ENCODE measurements at regions of chr5 and their contacts with region 1.

Region 1: DNA sequence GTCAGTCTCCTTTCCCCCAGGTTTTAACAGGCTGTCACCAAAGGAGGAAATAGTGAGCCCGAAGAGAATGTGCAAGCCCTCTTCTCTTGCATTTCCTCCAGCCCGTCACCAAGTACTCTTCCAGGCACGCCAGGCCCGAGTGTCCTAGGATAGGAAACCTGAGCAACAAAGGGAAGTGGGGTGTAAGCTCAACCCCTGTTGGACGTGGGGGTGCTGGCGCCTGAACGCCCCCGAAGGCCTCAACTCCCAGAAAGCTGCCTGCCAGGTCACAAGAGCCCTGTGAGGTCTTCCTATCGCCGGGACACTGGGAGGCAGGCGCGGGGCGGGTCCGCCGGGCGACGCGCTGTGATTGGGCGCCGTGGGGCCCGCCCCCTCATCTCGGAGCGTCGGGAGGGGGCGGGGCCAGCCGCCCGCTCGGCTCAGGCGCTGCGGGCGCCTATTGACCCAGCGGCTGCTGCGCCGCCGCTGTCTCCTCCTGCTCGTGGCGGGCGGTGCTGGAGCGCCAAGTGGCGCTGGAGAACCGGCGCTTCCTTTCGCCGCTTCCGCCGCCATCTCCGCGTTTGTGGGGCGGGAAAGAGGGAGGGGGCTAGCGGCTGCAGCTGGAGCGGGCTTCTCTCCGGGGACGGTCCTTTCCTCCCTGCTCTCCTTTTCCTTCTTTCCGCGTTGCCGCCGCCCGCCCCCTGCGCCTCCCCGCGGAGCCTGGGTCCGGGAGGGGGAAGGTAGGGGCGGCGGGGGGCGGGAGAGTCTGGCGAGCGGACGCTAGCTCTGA is 572 bp upstream of the MAN2A1 start:
- DNase-seq: peak; percentile 74
- H3K4me3 Mint-ChIP-seq: peak overlapping the region; percentile 86
- H3K27ac Mint-ChIP-seq: peak overlapping the region; percentile 91
- H3K4me1 Mint-ChIP-seq: peaks cover 34% of the 10 kb centered on the region
- H3K27me3 Mint-ChIP-seq: peaks cover 6% of the 10 kb centered on the region

Region 2: DNA sequence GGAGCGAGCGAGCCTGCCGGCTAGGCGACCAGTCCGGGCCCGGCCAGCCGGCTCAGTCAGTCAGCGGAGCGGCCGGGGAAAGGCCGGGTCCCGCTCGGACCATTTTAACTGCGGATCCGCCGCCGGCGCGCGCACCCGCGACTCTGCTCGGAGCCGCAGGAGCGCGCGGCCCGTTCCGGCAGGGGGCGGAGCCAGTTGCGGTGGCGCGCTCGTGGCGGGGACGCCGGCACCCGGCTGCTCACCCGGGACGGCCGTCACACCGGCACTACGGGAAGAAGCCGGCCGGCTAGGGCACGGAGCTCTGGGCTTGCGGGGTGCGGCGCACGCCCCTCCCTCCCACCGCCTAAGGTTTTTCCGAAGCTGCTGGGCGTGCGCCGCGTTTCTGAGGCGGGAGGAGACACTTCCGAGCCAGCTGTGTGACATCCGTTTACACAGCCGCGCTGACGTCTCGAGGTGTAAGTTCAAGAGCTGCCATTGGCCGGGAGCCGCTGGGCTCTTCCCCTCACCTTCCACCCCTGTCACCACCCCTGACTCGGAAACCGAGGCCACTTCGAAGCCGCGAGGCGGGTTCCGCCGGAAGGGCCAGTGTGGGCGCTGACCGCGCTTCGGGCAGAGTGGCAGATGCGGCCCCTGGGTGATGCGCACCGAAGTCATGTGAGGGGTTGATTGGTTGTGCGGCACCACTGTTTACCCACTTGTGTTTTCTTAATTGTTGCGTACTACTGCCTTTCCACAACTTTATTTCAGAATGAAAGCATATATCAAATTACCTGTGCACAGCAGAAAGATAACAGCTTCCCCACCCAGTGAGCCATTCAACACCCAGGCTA is 1307.0 kb before region 1 on chr5 and contains the start of gene FBXL17:
- intact Hi-C with region 1: loop called (anchors 5 kb)
- DNase-seq: peak; percentile 89
- H3K4me3 Mint-ChIP-seq: peak within 1 kb of the TSS; percentile 80
- H3K27ac Mint-ChIP-seq: peak within 1 kb of the TSS; percentile 83
- H3K4me1 Mint-ChIP-seq: peaks cover 27% of the 10 kb centered on the region
- H3K27me3 Mint-ChIP-seq: no peaks in the 10 kb centered on the region
- total RNA-seq, gene FBXL17: 7.0 and 9.3 TPM in 2 replicates

Region 3: GRCh38 chr5:109409844-109410388 is 279.2 kb before region 1 on chr5 and contains the start of gene PJA2:
- intact Hi-C with region 1: loop called (anchors 1 kb)
- DNase-seq: peak; percentile 96
- H3K4me3 Mint-ChIP-seq: peak within 1 kb of the TSS; percentile 95
- H3K27ac Mint-ChIP-seq: peak within 1 kb of the TSS; percentile 98
- H3K4me1 Mint-ChIP-seq: peaks cover 41% of the 10 kb centered on the region
- H3K27me3 Mint-ChIP-seq: no peaks in the 10 kb centered on the region
- total RNA-seq, gene PJA2: 52.2 and 52.9 TPM in 2 replicates

Region 4: DNA sequence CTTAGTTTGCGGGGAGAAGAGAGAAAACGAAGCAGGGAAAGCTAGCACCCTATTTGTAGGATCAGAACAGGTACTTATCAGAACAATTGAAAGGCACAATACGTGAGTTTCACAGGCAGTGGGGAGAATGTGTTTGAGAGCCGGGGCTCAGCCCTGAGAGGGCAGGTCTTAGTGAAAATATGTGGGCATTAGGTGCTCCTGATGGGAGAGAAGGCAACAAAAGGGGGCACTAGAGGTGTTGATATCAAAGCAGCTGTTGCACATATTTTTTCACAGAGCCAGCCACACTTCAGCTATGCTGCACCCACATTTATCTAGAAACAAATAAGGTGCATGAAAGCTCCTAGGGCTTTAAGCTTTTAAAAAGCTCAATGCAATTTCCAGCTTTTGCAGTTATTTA is 99.2 kb before region 1 on chr5:
- intact Hi-C with region 1: no loop called
- DNase-seq: no peak
- H3K4me3 Mint-ChIP-seq: no peak overlapping the region
- H3K27ac Mint-ChIP-seq: no peak overlapping the region
- H3K4me1 Mint-ChIP-seq: no peaks in the 10 kb centered on the region
- H3K27me3 Mint-ChIP-seq: peaks cover 2% of the 10 kb centered on the region

Region 5: DNA sequence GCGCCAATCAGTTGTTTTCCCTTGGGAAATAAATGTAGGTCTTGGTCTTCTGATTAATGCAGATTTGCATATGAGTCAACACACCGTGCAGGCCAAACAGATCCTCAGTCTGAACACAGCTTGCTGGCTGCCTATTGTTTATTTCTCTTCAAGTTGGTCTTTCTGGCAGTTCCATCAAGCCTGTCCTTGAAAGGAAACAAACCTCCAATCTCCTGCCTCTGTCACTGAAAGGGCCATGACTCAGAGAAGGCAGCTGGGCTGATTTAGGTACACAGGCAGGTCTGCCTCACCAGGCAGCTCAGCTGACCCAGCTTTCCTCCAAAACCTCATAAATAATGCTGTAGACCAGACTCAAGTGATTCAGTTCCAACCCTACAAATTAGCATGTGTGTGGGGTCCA is 176.5 kb after region 1 on chr5:
- intact Hi-C with region 1: loop called (anchors 2 kb)
- DNase-seq: no peak
- H3K4me3 Mint-ChIP-seq: no peak overlapping the region
- H3K27ac Mint-ChIP-seq: no peak overlapping the region
- H3K4me1 Mint-ChIP-seq: peaks cover 34% of the 10 kb centered on the region
- H3K27me3 Mint-ChIP-seq: no peaks in the 10 kb centered on the region

Region 6: DNA sequence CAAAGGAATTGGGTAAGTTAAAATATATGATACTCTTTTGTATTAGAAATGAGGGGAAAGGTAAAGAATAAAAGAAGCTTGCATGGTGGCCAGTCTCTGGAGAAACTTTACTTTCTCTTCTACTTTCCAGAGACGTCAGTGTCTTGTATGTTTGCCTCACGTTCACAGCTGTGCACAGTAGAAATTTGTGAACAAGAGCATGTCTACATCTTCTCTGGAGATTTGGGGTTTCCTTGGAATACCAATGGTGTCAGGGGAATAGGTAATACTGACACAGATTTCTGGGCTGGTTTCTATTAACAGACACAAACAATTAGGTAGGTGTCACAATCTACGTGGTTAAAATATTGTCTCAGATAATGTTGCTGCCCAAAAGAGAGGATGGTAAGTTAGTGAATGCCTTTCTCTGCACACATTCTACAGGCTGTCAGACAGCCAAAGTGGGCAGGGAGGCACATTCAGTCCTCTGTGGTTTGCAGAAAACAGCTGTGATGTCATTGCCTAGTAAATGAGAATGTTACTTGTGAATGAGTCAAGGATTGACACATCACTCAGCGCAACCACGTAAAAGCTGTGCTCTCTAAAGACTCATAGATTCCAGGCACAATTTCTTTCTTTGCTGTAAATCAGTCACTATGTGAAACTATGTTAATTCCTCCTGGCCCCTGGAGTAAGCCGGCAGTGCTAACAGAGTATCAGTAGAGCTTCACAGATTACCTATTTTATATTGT is 397.7 kb after region 1 on chr5:
- intact Hi-C with region 1: loop called (anchors 2 kb)
- DNase-seq: peak; percentile 18
- H3K4me3 Mint-ChIP-seq: peak overlapping the region; percentile 51
- H3K27ac Mint-ChIP-seq: peak overlapping the region; percentile 89
- H3K4me1 Mint-ChIP-seq: peaks cover 31% of the 10 kb centered on the region
- H3K27me3 Mint-ChIP-seq: no peaks in the 10 kb centered on the region

Region 7: GRCh38 chr5:110738812-110739651 is 1049.9 kb after region 1 on chr5 and contains the start of gene SLC25A46:
- intact Hi-C with region 1: loop called (anchors 5 kb)
- DNase-seq: peak; percentile 86
- H3K4me3 Mint-ChIP-seq: peak within 1 kb of the TSS; percentile 97
- H3K27ac Mint-ChIP-seq: peak within 1 kb of the TSS; percentile 92
- H3K4me1 Mint-ChIP-seq: peaks cover 28% of the 10 kb centered on the region
- H3K27me3 Mint-ChIP-seq: peaks cover 11% of the 10 kb centered on the region
- total RNA-seq, gene SLC25A46: 44.0 and 44.8 TPM in 2 replicates